ENCODE measurements at regions of chr15 and their contacts with region 1.

Region 1: GRCh38 chr15:90648137-90649070 is 68.7 kb upstream of the BLM start:
- DNase-seq: peak; percentile 59
- ATAC-seq: peak; percentile 83
- H3K4me3 Mint-ChIP-seq: no peak overlapping the region
- H3K27ac Mint-ChIP-seq: no peak overlapping the region
- H3K4me1 Mint-ChIP-seq: peaks cover 19% of the 10 kb centered on the region
- H3K27me3 Mint-ChIP-seq: no peaks in the 10 kb centered on the region
- CTCF ChIP-seq: peak; percentile 89

Region 2: GRCh38 chr15:90523373-90523772 is 125.0 kb before region 1 on chr15:
- CTCF ChIA-PET with region 1: no interaction called
- POLR2A ChIA-PET with region 1: no interaction called
- DNase-seq: no peak
- ATAC-seq: no peak
- H3K4me3 Mint-ChIP-seq: no peak overlapping the region
- H3K27ac Mint-ChIP-seq: no peak overlapping the region
- H3K4me1 Mint-ChIP-seq: no peaks in the 10 kb centered on the region
- H3K27me3 Mint-ChIP-seq: peaks cover 8% of the 10 kb centered on the region
- CTCF ChIP-seq: no peak

Region 3: GRCh38 chr15:90660195-90660998 is 12.0 kb after region 1 on chr15:
- CTCF ChIA-PET with region 1: interaction called, 18 read pairs
- POLR2A ChIA-PET with region 1: no interaction called
- DNase-seq: no peak
- ATAC-seq: peak; percentile 34; the same call in 1 of the 2 replicates
- H3K4me3 Mint-ChIP-seq: no peak overlapping the region
- H3K27ac Mint-ChIP-seq: no peak overlapping the region
- H3K4me1 Mint-ChIP-seq: peaks cover 11% of the 10 kb centered on the region
- H3K27me3 Mint-ChIP-seq: no peaks in the 10 kb centered on the region; the same call in none of the 2 replicates
- CTCF ChIP-seq: no peak

Region 4: GRCh38 chr15:90665288-90666134 is 17.1 kb after region 1 on chr15:
- CTCF ChIA-PET with region 1: interaction called, 18 read pairs
- POLR2A ChIA-PET with region 1: no interaction called
- DNase-seq: peak; percentile 57
- ATAC-seq: peak; percentile 64
- H3K4me3 Mint-ChIP-seq: peak overlapping the region; percentile 62
- H3K27ac Mint-ChIP-seq: no peak overlapping the region
- H3K4me1 Mint-ChIP-seq: peaks cover 4% of the 10 kb centered on the region; the same call in 1 of the 2 replicates
- H3K27me3 Mint-ChIP-seq: peaks cover 7% of the 10 kb centered on the region
- CTCF ChIP-seq: no peak

Region 5: GRCh38 chr15:90691982-90692773 is 43.8 kb after region 1 on chr15:
- CTCF ChIA-PET with region 1: interaction called, 18 read pairs
- POLR2A ChIA-PET with region 1: no interaction called
- DNase-seq: no peak
- ATAC-seq: no peak
- H3K4me3 Mint-ChIP-seq: no peak overlapping the region
- H3K27ac Mint-ChIP-seq: no peak overlapping the region
- H3K4me1 Mint-ChIP-seq: no peaks in the 10 kb centered on the region; the same call in 1 of the 2 replicates
- H3K27me3 Mint-ChIP-seq: no peaks in the 10 kb centered on the region
- CTCF ChIP-seq: no peak

Region 6: DNA sequence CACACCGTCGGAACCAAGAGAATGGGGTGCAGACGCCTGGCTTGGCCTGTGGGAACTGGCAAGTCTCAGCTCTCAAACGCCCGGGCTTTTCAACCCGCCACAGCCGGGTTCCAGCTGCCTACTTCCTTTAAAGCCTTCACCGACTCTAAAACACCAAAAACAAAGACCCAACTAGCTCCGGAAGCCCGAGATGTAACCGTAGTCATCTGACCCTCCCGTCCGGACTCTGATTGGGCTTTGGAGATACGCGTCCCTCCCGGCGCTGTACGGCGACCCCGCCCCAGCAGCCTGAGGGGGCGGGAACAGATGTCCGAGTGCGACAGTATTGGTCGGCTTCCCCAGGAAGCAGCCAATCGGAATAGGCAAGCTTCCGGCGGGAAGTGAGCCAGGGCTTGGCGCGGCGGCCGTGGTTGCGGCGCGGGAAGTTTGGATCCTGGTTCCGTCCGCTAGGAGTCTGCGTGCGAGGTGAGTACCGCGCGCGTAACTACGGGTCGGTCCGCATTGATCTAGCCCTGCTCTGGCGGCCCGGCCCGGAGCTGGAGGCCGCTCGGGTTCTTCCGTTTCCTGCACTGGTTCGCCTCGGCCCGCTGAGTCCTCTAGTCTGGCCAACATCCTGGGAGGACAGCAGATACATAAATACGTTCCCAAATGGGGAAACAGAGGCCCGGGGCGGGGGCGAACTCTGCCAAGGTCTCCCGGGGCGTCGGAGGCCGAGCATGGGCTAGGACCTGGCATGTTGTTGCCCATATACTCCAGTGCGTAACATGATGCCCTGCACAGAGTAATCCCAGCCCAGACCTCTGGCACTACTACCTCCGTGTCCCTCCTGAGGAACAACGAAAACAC is 68.8 kb after region 1 on chr15 and contains the start of gene BLM:
- CTCF ChIA-PET with region 1: interaction called, 10 read pairs
- POLR2A ChIA-PET with region 1: no interaction called
- DNase-seq: peak; percentile 95
- ATAC-seq: peak; percentile 99
- H3K4me3 Mint-ChIP-seq: peak within 1 kb of the TSS; percentile 98
- H3K27ac Mint-ChIP-seq: peak within 1 kb of the TSS; percentile 98
- H3K4me1 Mint-ChIP-seq: peaks cover 16% of the 10 kb centered on the region
- H3K27me3 Mint-ChIP-seq: no peaks in the 10 kb centered on the region
- CTCF ChIP-seq: no peak
- total RNA-seq, gene BLM: 29.9 to 40.5 TPM (median 34.8 TPM) in 3 replicates

Region 7: DNA sequence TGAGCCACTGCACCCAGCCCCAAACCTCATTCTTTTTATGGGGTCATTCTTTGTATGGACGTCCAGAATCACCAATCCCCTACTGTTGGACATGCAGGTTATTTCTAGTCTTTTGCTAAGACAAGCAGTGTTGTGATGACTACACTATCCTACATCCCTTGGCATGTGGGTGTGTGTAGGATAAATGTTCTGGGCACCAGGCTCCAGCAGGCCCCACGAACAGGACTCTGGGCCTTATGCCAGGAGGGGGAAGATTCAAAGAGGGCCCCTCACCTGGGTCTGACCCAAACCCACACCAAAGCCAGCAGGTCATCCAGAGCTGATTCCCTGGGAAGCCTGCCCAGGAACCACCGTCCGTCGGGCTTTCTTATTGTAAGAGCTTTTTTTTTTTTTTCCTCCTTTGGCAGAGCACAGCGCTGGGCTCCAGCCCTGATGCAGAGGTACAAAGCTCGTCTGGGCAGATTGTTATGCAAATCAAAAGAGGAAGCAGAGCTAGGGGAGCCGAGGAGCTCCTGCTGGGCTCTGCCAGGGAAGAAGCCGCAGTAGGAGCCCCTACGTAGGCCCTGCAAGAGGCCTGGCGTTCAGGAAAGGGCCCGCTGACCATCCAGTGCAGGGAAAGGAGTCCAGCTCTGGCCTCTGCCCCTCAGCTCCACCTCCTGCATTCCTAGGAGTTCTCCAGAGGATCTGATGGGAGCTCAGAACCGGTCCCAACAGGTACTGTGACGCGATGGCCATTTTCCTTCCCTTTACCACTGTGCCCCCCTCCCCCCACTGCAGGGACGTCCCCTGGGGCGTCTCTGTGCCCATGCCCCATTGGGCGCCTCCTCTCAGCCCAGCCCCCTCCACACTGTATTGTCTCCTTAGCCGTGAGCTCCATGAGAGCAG is 191.0 kb after region 1 on chr15:
- CTCF ChIA-PET with region 1: interaction called, 10 read pairs
- POLR2A ChIA-PET with region 1: no interaction called
- DNase-seq: peak; percentile 72
- ATAC-seq: peak; percentile 93
- H3K4me3 Mint-ChIP-seq: peak overlapping the region; percentile 22
- H3K27ac Mint-ChIP-seq: peak overlapping the region; percentile 93
- H3K4me1 Mint-ChIP-seq: peaks cover 53% of the 10 kb centered on the region
- H3K27me3 Mint-ChIP-seq: no peaks in the 10 kb centered on the region
- CTCF ChIP-seq: no peak

Measured in WTC11 (cell line).